Activated T-helper 1 cell treated with anti-CD3 and anti-CD28 coated beads, Interleukin-12 subunit alpha, Interleukin-12 subunit beta, Interleukin-2, Interleukin-4 antibody, amounts not matched to agents 30 ng/mL and 10 ng/mL and 1 ng/mL, durations not matched to agents 14 hours and 24 hours and 36 hours (primary cell): ENCODE measurements at regions of chr22 and their contacts with region 1.

Region 1: GRCh38 chr22:31107178-31107893 is at the start of gene SELENOM:
- DNase-seq: peak; percentile 86
- H3K4me3 Mint-ChIP-seq: peak within 1 kb of the TSS; percentile 83
- H3K27ac Mint-ChIP-seq: peak within 1 kb of the TSS; percentile 33
- H3K4me1 Mint-ChIP-seq: peaks cover 19% of the 10 kb centered on the region
- H3K27me3 Mint-ChIP-seq: peaks cover 6% of the 10 kb centered on the region
- total RNA-seq, gene SELENOM: 6.4 and 9.8 TPM in 2 replicates

Region 2: DNA sequence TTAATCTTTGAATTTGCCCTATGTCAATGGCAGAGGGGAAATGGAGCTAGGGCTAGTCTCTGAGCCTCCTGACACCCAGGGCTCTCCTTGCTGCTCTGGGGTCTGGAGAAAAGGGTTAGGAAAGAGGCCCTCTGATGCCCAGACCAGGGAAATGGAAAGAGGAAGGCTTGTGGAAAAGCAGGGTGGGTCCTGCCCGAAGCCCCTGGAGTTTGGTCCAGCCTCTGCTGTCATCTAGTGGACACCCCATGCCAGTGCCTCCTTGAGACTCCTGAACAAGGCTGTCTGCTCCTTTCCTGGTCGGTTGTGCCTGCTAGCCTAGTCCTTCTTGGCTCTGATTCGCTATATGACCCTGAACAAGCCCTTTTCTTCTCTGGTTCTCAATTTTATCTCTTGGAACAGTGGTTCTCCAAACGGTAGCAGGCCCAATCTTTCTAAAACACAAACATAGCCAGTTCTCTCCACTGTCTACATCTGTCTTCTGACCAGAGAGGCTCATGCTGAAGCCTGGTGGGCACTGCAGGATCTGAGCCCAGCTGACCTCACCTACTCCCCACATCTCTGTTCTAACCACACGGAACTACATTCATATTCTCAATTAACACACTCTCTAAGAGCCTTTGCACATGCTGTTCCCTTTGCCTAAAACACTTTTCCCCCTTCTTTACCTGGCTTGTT is 41.8 kb after region 1 on chr22:
- intact Hi-C with region 1: loop called (anchors 2 kb)
- DNase-seq: no peak
- H3K4me3 Mint-ChIP-seq: no peak overlapping the region
- H3K27ac Mint-ChIP-seq: no peak overlapping the region
- H3K4me1 Mint-ChIP-seq: peaks cover 7% of the 10 kb centered on the region
- H3K27me3 Mint-ChIP-seq: peaks cover 2% of the 10 kb centered on the region

Region 3: DNA sequence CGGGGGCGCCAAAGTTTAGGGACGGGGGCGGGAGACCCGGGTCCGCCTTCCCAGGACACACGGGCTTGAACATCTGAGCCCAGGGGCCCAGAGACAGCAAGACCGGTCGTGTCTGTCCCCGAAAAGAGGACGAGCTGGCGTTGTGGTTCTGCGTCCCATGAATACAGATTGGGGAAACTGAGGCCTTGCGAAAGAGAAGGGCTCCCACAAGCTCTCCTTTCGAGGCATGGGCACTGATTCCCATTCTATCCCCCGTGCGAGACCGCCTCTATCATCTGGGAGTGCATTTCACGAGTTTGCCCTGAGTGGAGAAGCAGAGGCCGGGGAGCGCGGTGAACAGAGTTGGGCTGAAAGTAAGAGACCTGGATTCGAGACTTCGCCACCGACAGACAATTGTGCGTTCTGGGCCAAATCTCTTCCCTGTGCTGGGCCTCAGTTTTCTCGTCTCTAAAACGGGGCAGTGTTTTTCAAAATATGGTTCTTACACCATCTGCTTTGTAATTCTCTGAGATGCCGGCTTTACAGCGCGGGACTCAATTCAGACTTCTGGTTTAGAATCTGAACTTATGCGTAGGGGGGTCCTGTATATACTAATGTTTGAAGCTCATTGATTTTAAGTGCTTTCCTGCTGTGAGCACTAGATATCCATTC is 53.1 kb after region 1 on chr22:
- intact Hi-C with region 1: loop called (anchors 1 kb)
- DNase-seq: peak; percentile 9
- H3K4me3 Mint-ChIP-seq: peak overlapping the region; percentile 100
- H3K27ac Mint-ChIP-seq: peak overlapping the region; percentile 95
- H3K4me1 Mint-ChIP-seq: peaks cover 42% of the 10 kb centered on the region
- H3K27me3 Mint-ChIP-seq: peaks cover 15% of the 10 kb centered on the region

Region 4: DNA sequence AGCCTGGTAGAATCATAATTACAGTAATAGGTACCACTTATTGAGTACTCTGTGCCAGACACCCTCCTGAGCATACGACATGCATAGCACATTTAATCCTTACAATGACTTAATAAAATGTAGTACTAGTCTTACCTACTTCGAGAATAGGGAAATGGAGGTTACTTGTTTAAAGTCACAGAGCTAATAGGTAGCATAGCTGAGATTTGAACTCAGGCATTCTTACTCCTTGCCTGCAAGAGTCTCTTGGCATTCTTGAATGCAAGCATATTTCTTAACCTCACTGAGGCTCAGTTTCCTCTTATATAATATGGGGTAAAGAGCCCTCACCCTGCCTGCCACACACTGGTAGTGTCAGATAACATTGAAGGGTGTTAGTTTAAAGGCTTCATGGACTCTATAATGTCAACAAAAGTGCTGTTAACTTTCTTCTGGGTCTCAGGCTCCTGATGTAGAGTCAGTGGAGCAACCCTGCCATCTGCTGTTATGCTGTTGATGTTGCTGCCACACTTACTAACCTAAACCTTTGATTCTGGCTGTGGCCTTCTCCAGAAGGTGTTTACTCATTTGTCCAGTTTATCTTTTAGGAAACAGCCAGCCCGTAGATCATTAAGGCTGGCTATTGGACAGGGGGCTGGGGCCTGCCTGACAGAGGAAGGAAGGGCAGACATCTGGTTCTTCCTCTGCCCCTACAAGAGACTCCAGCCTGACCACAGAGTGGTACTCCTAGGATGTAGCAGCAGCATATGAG is 123.7 kb after region 1 on chr22:
- intact Hi-C with region 1: loop called (anchors 5 kb)
- DNase-seq: peak; percentile 25
- H3K4me3 Mint-ChIP-seq: peak overlapping the region; percentile 60
- H3K27ac Mint-ChIP-seq: peak overlapping the region; percentile 57
- H3K4me1 Mint-ChIP-seq: peaks cover 62% of the 10 kb centered on the region
- H3K27me3 Mint-ChIP-seq: no peaks in the 10 kb centered on the region

Region 5: DNA sequence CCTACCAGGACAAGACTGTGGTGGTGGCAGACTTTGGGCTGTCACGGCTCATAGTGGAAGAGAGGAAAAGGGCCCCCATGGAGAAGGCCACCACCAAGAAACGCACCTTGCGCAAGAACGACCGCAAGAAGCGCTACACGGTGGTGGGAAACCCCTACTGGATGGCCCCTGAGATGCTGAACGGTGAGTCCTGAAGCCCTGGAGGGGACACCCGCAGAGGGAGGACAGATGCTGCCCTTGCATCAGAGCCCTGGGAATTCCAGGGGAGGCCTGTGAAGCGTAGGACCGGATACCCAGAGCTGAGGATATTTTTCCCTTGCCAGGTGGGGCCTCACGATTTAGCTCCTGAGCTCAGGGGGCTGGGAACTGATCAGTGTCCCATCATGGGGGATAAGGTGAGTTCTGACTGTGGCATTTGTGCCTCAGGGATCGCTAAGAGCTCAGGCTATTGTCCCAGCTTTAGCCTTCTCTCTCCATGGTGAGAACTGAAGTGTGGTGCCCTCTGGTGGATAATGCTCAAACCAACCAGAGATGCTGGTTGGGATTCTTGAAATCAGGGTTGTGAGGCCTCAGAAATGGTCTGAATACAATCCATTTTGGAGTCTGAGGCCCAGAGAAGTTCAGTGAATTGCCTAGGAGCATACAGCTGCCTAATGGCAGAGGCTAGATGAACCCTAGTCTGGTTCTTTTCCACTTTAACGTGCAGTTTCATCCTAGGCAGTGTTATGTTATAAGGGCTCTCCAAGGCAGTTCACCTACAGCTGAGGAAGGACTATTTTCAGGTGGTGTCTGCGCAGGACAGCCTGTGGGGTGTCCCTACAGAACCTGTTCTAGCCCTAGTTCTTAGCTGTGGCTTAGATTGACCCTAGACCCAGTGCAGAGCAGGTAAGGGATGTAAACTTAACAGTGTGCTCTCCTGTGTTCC is 165.4 kb after region 1 on chr22:
- intact Hi-C with region 1: loop called (anchors 1 kb)
- DNase-seq: peak; percentile 26
- H3K4me3 Mint-ChIP-seq: no peak overlapping the region
- H3K27ac Mint-ChIP-seq: peak overlapping the region; percentile 52
- H3K4me1 Mint-ChIP-seq: peaks cover 14% of the 10 kb centered on the region
- H3K27me3 Mint-ChIP-seq: no peaks in the 10 kb centered on the region

Region 6: DNA sequence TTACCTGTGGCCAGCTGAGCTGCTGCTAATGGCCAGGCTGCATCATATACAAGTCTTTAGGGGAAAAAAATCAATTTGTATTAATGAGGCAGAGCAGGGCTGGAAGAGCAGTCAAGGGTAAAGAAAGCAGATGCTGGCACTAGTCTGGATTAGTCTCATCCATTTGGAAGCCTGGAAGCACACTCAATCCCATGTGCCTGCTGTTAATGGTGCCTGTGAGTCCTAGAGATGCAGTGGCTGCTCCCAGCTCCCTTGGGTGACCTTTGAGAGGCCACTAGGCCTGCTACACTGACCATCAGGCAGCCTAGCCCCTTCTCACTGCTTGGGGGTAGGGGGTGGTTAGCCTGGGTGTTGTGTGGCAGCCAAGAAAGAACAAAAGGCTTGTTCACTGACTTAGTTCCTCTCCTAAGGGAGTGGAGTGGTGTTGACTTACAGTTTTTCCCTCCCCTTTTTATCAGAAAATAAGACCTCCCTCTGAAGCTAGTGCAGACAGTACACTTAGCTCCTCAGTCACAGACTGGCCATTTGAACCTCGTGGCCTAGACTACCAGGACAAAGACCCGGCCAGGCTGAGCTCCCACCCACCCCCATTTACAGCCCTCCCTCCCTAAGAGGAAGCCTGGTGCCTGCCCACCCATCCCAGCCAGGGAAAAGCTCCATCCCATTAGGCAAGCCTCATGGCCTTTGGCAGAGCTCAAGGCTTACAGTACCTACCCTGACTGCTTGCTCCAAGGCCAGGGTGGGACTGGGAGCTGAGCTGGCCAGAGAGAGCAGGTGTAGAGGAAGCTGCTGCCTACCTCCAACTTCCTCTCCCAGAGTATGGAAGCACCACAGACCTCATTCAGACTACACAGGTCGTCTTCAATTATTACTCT is 177.2 kb after region 1 on chr22:
- intact Hi-C with region 1: no loop called
- DNase-seq: no peak
- H3K4me3 Mint-ChIP-seq: no peak overlapping the region
- H3K27ac Mint-ChIP-seq: peak overlapping the region; percentile 85
- H3K4me1 Mint-ChIP-seq: peaks cover 79% of the 10 kb centered on the region
- H3K27me3 Mint-ChIP-seq: no peaks in the 10 kb centered on the region

Region 7: GRCh38 chr22:31313366-31314147 is 206.2 kb after region 1 on chr22:
- intact Hi-C with region 1: loop called (anchors 5 kb)
- DNase-seq: peak; percentile 41
- H3K4me3 Mint-ChIP-seq: no peak overlapping the region
- H3K27ac Mint-ChIP-seq: no peak overlapping the region
- H3K4me1 Mint-ChIP-seq: peaks cover 9% of the 10 kb centered on the region
- H3K27me3 Mint-ChIP-seq: no peaks in the 10 kb centered on the region